Right cardiac atrium (tissue), 5 donors: ENCODE measurements at regions of chr1 and their contacts with region 1.

Region 1: DNA sequence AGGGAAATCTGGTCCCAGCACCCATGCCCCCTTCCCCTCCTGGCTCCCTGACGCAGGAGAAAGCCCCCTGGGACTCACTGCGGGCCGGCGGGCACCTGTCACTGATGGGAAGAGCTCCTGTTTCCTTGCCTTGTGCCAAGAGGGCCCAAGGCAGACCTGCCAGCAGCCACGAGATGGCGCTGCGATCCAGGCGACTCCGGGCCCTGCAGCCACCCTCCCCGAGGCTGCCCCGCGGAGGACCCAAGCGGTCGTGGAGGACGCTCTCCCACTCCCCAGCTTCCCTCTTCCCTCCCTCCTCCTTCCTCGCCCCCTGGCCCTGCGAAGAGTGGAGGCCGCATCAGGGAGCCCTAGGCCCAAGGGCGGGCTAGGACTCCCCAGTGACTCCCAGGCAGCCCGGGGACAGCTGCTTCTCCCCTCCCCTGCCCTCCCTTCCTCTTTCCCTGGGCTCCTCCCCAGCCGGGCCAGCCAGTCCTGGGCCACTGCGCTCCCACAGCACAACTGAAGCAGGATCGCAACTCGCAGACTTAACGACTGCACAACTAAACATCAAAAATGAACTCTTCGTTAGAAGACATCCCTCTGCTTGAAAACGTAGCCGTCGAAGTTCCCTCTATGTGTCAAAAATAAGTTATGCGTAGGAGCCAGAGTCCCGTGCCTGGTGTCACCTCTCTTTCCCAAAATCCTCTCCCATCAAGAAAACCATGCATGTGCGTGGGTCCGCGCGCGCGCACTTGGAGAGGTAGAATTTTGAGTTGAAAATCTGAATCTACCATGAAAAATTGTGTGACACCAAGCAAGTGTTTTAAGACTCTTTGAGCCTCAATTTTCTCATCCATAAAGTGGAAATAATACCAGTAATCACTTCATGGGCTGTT is 34.2 kb downstream of the BATF3 start:
- DNase-seq: peak; percentile 84 to 93 (median 92)
- ATAC-seq: peak; percentile 96 to 99
- H3K4me3 ChIP-seq: peak overlapping the region; percentile 39
- H3K27ac ChIP-seq: peak overlapping the region; percentile 33
- H3K4me1 ChIP-seq: peaks cover 7% of the 10 kb centered on the region
- H3K27me3 ChIP-seq: no peaks in the 10 kb centered on the region

Region 2: DNA sequence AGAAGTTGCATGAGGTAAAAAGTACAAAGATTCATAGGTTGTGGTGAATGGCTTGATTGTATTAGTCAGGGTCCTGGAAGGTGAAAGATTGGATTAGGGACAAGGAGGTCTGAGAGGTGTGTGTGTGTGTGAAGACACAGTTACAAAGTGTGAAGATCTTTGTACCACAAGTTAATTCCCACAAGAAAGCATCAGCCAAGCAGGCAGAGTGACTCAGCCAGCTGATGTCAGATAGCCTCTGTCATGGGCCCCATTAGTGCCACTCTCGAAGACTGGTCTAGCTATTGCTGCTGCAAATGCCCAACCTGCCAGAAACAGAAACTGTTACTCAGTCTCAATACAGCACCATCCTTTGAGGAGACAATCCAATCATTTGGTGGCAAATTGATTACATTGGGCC is 533.5 kb before region 1 on chr1:
- intact Hi-C with region 1: no loop called
- DNase-seq: no peak
- ATAC-seq: no peak
- H3K4me3 ChIP-seq: no peak overlapping the region
- H3K27ac ChIP-seq: no peak overlapping the region
- H3K4me1 ChIP-seq: no peaks in the 10 kb centered on the region
- H3K27me3 ChIP-seq: no peaks in the 10 kb centered on the region

Region 3: DNA sequence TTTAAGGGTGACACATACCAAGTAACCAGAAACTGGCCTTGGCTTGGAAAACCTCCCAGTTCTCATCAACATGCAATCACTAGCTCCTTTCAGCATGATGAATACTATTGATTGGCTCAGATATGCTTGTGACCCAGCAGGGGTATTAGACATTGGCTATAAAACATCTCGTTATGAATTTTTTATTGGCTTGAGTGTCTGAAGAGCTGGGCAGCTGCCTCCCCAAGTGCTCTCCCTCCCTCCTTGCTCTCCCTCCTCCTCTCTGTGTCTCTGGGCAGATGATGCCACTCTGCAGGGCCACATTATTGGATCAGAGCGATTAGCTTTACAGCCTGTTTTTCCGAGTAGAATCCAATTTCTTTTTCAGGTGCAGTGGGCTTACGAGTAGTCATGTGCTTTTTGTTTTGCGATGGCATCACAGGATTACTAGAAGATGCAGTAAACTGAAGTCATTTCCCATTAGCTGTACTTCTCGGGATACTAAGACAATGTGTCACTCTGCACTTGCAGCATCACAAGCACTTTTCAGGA is 136.2 kb before region 1 on chr1:
- intact Hi-C with region 1: no loop called
- DNase-seq: no peak
- ATAC-seq: no peak
- H3K4me3 ChIP-seq: no peak overlapping the region
- H3K27ac ChIP-seq: no peak overlapping the region
- H3K4me1 ChIP-seq: no peaks in the 10 kb centered on the region
- H3K27me3 ChIP-seq: no peaks in the 10 kb centered on the region

Region 4: DNA sequence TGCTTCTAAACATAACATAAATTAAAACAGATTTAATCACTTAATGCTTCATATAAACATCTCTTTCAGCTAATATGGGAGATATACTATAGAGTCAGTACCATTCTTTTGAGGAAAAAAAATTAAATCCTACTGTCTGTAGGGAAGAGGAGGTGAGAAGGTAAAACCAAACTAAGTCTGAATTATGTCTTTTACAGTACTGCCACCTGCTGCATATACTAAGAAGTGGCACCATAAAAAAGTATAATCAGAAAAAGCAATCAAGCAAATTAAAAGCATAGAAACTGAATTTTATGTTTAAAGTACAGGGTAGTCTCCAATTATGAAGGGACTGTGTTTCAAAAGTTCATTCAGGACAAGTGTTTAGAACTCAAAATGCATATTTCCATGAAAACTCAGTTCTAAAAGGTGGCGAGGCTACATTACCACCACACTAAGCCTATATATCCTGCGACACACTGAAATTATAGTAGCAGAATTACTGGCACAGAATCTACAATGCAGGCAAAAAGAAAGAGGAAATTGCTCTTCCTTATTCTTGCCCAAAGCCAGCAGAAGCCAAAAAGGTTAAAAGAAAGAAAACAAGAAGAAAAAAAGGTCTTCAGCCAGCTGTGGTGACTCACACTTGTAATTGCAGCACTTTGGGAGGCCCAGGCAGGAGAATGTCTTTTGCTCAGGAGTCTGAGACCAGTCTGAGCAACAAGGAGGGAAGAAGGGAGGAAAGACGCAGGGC is 117.1 kb after region 1 on chr1:
- intact Hi-C with region 1: loop called in 3 of 4 experiments (anchors 5 to 10 kb)
- DNase-seq: no peak
- ATAC-seq: peak; percentile 14 to 26
- H3K4me3 ChIP-seq: no peak overlapping the region
- H3K27ac ChIP-seq: no peak overlapping the region
- H3K4me1 ChIP-seq: no peaks in the 10 kb centered on the region
- H3K27me3 ChIP-seq: no peaks in the 10 kb centered on the region

Region 5: GRCh38 chr1:213103377-213104306 is 438.2 kb after region 1 on chr1:
- intact Hi-C with region 1: no loop called
- DNase-seq: no peak
- ATAC-seq: no peak
- H3K4me3 ChIP-seq: no peak overlapping the region
- H3K27ac ChIP-seq: no peak overlapping the region
- H3K4me1 ChIP-seq: no peaks in the 10 kb centered on the region
- H3K27me3 ChIP-seq: no peaks in the 10 kb centered on the region